HEK293 (cell line): ENCODE measurements at regions of chr16 and their contacts with region 1.

Region 1: GRCh38 chr16:22374311-22375116 is at the start of gene CDR2:
- H3K4me3 ChIP-seq: peak within 1 kb of the TSS; percentile 72
- H3K27ac ChIP-seq: peak within 1 kb of the TSS; percentile 56; the same call in 1 of the 2 replicates
- H3K4me1 ChIP-seq: peaks cover 11% of the 10 kb centered on the region; the same call in 1 of the 2 replicates
- CTCF ChIP-seq: peak; percentile 46

Region 2: GRCh38 chr16:22386976-22387375 is 12.5 kb after region 1 on chr16:
- CTCF ChIA-PET with region 1: no interaction called
- POLR2A ChIA-PET with region 1: interaction called, 20 read pairs
- H3K4me3 ChIP-seq: no peak overlapping the region
- H3K27ac ChIP-seq: no peak overlapping the region
- H3K4me1 ChIP-seq: peaks cover 3% of the 10 kb centered on the region; the same call in 1 of the 2 replicates
- CTCF ChIP-seq: no peak